Dorsolateral prefrontal cortex (tissue), 120 donors: ENCODE measurements at regions of chrX and their contacts with region 1.

Region 1: GRCh38 chrX:154478728-154479622 is at the start of gene LAGE3:
- DNase-seq: peak; percentile 83 to 96 (median 91)
- H3K4me3 ChIP-seq: peak within 1 kb of the TSS; percentile 37 to 70 (median 58)
- H3K27ac ChIP-seq: peak within 1 kb of the TSS; percentile 18 to 93 (median 86)
- H3K27me3 ChIP-seq: peaks cover 0 to 69% (median 5%) of the 10 kb centered on the region in 45 donors
- CTCF ChIP-seq: peak in 5 of 56 donors; percentile 7 to 14 (median 11)
- total RNA-seq, gene LAGE3: 21.6 to 55.2 (median 36.1) TPM

Region 2: DNA sequence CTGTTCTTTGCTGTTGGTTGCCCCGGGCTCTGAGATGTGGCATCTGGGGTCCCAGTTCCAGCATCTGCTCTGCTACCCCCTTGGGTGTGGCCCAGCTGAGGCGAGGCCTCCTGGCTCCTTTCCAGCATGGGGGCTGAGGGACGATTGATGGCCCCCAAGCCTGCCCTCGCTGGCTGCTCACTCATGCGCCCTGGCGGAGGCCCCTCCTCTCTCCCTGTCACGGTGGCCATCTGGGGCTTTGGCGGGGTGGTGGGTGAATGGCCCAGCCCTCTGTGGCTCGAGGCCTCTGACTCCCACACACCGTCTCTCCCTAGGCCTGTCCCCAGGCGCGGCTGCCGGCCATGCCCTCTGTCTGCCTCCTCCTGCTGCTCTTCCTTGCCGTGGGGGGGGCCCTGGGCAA is 19.1 kb before region 1 on chrX:
- intact Hi-C with region 1: loop called in 1 of 2 experiments (anchors 2 kb)
- DNase-seq: no peak
- H3K4me3 ChIP-seq: peak overlapping the region in 30 of 59 donors; percentile 54 to 76 (median 67)
- H3K27ac ChIP-seq: peak overlapping the region in 25 of 59 donors; percentile 1 to 79 (median 37)
- H3K27me3 ChIP-seq: peaks cover 0 to 36% (median 0%) of the 10 kb centered on the region in 45 donors
- CTCF ChIP-seq: no peak